HepG2 (cell line): ENCODE measurements at regions of chr6 and their contacts with region 1.

Region 1: DNA sequence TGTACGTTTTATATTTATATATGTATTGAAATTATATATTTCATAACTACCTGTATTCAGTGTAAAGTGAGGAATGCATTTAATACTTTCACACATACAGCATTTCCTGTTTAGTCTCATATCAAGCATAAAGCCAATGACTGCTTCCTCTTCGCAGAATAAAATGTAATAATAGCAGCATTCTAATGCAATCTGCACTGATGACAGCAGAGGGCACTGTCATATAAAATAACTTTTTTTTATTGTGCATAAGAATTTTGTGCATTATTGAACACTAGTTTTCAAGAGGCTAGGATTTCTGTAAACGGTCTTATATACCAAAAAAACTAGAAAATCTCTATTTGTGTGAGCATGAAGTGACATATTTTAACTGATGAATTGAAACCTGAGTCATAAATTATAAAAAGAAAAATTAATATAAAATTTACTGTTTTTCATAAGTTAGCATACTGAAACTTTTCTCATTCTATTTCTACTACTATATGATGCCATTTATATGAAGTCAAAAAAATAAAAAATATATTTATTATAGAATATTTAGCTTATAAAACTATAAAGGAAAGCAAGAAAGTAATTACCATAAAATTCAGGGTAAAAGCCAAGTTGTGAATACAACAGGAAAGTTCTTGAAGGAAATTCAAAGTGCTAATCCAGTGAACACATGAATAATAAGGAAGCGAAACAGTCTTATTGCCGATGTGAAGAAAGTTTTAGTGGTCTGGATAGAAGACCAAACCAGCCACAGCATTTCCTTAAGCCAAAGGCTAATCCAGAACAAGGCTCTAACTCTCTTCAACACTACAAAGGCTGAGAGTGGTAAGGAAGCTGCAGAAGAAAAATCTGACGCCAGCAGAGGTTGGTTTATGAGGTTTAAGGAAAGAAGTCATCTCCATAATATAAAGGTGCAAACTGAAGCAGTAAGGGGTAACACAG is 36.3 kb downstream of the RNF146 start:
- DNase-seq: peak; percentile 25
- ATAC-seq: no peak; the same call in 2 of the 3 replicates
- H3K4me3 ChIP-seq: no peak overlapping the region
- H3K27ac ChIP-seq: no peak overlapping the region
- H3K4me1 ChIP-seq: peaks cover 18% of the 10 kb centered on the region
- H3K27me3 ChIP-seq: no peaks in the 10 kb centered on the region
- CTCF ChIP-seq: peak; percentile 46
- EP300 ChIP-seq: no peak
- POLR2A ChIP-seq: no peak
- RAD21 ChIP-seq: no peak; the same call in 1 of the 2 replicates

Region 2: GRCh38 chr6:127247114-127248096 is 55.6 kb before region 1 on chr6:
- CTCF ChIA-PET with region 1: no interaction called
- POLR2A ChIA-PET with region 1: no interaction called
- in situ Hi-C with region 1: no loop called
- intact Hi-C with region 1: no loop called
- DNase-seq: no peak
- ATAC-seq: no peak
- H3K4me3 ChIP-seq: no peak overlapping the region
- H3K27ac ChIP-seq: no peak overlapping the region
- H3K4me1 ChIP-seq: no peaks in the 10 kb centered on the region
- H3K27me3 ChIP-seq: no peaks in the 10 kb centered on the region
- CTCF ChIP-seq: no peak
- EP300 ChIP-seq: no peak
- POLR2A ChIP-seq: no peak
- RAD21 ChIP-seq: no peak

Region 3: DNA sequence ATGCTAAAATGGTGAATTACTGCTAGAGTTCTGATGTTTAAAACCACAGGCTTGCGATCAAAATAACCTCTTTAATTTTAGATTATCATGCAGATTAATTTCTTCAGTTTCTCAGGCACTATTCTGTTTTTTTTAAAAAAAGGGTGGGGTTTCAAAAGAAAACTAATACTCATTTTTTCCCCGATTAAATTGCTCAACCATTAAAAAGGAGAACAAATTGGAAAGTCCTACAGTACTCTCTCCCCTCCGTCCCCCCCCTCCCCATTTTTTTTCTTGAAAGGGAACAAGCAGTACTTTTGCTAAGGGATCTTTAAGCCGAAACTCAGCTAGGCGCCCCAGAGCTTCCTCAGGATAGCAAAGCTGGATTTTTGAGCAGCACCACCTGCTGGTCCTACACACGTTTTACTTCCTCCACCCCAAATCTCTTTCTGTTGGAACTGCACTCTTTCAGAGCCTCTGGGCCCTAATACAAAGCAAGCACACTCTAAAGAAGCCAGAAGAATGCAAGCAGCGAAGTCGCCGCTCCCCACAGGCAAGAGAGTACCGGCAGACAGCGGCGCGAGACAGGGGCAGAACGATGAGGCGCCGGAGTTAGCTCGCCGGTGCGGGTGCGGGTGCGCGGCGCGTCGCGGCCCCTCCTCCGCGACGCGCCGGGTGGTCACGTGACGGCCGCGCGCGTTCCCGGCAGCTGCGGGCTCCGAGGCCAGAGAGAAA is 36.7 kb before region 1 on chr6 and contains the start of gene RNF146:
- CTCF ChIA-PET with region 1: no interaction called
- POLR2A ChIA-PET with region 1: interaction called, 37 read pairs
- in situ Hi-C with region 1: no loop called
- intact Hi-C with region 1: no loop called
- DNase-seq: peak; percentile 81
- ATAC-seq: peak; percentile 85
- H3K4me3 ChIP-seq: peak within 1 kb of the TSS; percentile 87 to 97 (median 95)
- H3K27ac ChIP-seq: peak within 1 kb of the TSS; percentile 91
- H3K4me1 ChIP-seq: peaks cover 34% of the 10 kb centered on the region
- H3K27me3 ChIP-seq: no peaks in the 10 kb centered on the region; a peak in 1 of 5 replicates
- CTCF ChIP-seq: peak; percentile 92
- EP300 ChIP-seq: no peak
- POLR2A ChIP-seq: no peak
- RAD21 ChIP-seq: peak; percentile 49; the same call in 1 of the 2 replicates
- total RNA-seq, gene RNF146: 18.8 and 22.2 TPM in 2 replicates

Region 4: DNA sequence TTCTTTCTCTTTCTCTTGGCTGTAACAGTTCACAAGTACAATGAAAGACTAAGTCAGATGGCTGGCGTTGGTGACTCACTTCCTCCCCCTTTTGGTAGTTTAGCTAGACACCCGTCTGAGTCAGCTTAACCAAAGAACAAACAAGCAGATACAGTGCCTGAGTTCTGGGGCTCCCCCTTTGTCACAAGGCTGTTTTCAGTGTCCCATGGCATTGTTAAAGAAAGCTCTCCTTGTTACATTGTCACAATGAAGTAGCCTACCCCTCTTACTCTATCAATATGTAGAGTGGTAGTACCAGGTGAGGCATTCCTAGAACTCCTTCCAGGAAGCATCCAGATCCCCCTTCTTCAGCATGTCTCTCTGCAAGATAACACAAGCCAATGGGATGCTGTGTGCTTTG is 117.6 kb after region 1 on chr6:
- CTCF ChIA-PET with region 1: interaction called, 19 read pairs
- POLR2A ChIA-PET with region 1: no interaction called
- in situ Hi-C with region 1: loop called (anchors 10 kb)
- intact Hi-C with region 1: loop called (anchors 1 kb)
- DNase-seq: peak; percentile 89
- ATAC-seq: peak; percentile 99
- H3K4me3 ChIP-seq: no peak overlapping the region
- H3K27ac ChIP-seq: no peak overlapping the region
- H3K4me1 ChIP-seq: peaks cover 6% of the 10 kb centered on the region; the same call in 1 of the 2 replicates
- H3K27me3 ChIP-seq: no peaks in the 10 kb centered on the region
- CTCF ChIP-seq: peak; percentile 87
- EP300 ChIP-seq: peak in 1 of 2 experiments; percentile 14; a peak in 1 of 4 replicates
- POLR2A ChIP-seq: no peak
- RAD21 ChIP-seq: peak; percentile 45; the same call in 1 of the 2 replicates

Region 5: GRCh38 chr6:127547215-127547614 is 244.2 kb after region 1 on chr6:
- CTCF ChIA-PET with region 1: no interaction called
- POLR2A ChIA-PET with region 1: no interaction called
- in situ Hi-C with region 1: no loop called
- intact Hi-C with region 1: loop called (anchors 5 kb)
- DNase-seq: no peak
- ATAC-seq: peak; percentile 69
- H3K4me3 ChIP-seq: no peak overlapping the region
- H3K27ac ChIP-seq: no peak overlapping the region
- H3K4me1 ChIP-seq: no peaks in the 10 kb centered on the region
- H3K27me3 ChIP-seq: no peaks in the 10 kb centered on the region
- CTCF ChIP-seq: peak; percentile 39
- EP300 ChIP-seq: no peak
- POLR2A ChIP-seq: no peak
- RAD21 ChIP-seq: no peak